Right cardiac atrium (tissue), 5 donors: ENCODE measurements at regions of chr10 and their contacts with region 1.

Region 1: DNA sequence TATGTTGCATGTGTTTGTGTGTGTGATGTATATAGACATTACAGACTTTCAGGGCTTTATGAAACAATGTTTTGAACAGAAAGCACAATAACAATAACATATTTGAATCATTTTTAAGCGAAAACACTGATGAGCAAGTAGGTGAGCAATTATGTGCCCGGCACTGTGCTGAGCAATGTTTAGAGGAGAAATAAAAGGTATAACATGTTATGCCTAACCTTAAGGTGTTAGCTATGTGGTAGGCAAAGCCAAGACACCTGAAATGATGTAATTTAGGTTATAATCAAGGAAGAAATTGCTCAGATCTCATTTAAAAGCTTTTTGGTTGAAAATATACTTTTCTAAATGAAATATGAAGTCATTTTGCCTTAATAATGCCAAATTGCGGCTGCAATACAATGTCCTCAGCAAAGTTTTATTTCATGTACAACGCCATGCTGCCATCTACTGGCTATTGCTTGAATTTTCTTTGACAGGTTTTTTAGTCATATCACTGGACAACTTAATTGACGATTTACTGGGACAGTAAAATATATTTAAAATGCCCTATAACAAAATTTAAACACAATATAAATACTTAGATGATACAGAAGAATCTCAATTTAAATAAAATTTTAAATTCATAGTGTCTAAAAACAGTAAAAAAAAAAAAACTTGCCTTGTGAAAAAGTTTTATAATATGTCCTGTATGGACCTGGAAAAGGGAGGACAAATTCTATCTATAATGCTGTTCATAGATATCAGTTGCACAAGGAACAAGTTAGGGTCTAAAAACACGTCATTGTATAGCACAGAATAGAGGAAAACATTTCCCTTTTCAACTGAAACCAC is 131.1 kb upstream of the CDK1 start:
- DNase-seq: no peak
- ATAC-seq: peak in 1 of 2 donors; percentile 49
- H3K4me3 ChIP-seq: no peak overlapping the region
- H3K27ac ChIP-seq: no peak overlapping the region
- H3K4me1 ChIP-seq: no peaks in the 10 kb centered on the region
- H3K27me3 ChIP-seq: no peaks in the 10 kb centered on the region

Region 2: GRCh38 chr10:60099998-60100747 is 547.0 kb before region 1 on chr10:
- intact Hi-C with region 1: loop called in 1 of 4 experiments (anchors 10 kb)
- DNase-seq: no peak
- ATAC-seq: peak; percentile 55 to 66
- H3K4me3 ChIP-seq: no peak overlapping the region
- H3K27ac ChIP-seq: no peak overlapping the region
- H3K4me1 ChIP-seq: no peaks in the 10 kb centered on the region
- H3K27me3 ChIP-seq: no peaks in the 10 kb centered on the region

Region 3: DNA sequence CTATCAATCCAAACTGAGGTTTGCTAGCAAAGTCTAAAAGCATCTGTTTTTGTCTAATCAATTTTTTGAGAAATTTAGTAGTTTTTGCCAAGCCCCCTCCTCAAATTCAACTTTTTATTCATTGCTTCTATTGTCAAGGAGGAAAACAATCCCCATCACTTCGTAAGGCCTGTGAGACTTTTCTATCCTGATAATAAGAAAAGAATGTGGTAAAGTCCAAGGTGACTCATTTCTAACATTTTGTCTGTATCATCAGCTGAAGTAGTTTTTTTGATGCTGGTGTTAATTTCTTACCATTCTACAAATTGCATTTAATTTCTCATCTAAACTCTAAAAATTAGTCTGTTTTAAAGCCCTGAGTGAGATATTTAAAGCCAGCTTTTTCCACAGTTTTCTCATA is 269.2 kb before region 1 on chr10:
- intact Hi-C with region 1: no loop called
- DNase-seq: no peak
- ATAC-seq: no peak
- H3K4me3 ChIP-seq: no peak overlapping the region
- H3K27ac ChIP-seq: no peak overlapping the region
- H3K4me1 ChIP-seq: peaks cover 2% of the 10 kb centered on the region
- H3K27me3 ChIP-seq: no peaks in the 10 kb centered on the region

Region 4: GRCh38 chr10:60444494-60445064 is 202.6 kb before region 1 on chr10:
- intact Hi-C with region 1: loop called (anchors 2 to 10 kb)
- DNase-seq: no peak
- ATAC-seq: no peak
- H3K4me3 ChIP-seq: no peak overlapping the region
- H3K27ac ChIP-seq: no peak overlapping the region
- H3K4me1 ChIP-seq: peaks cover 2% of the 10 kb centered on the region
- H3K27me3 ChIP-seq: no peaks in the 10 kb centered on the region